Lower leg skin (tissue), 4 donors: ENCODE measurements at regions of chr12 and their contacts with region 1.

Region 1: GRCh38 chr12:3299929-3300832 is 190.8 kb upstream of the PRMT8 start:
- DNase-seq: peak; percentile 92 to 97
- H3K4me3 ChIP-seq: no peak overlapping the region
- CTCF ChIP-seq: peak in 1 of 3 donors; percentile 83
- POLR2A ChIP-seq: no peak

Region 2: GRCh38 chr12:3718100-3718499 is 417.9 kb after region 1 on chr12:
- intact Hi-C with region 1: no loop called
- DNase-seq: no peak
- H3K4me3 ChIP-seq: no peak overlapping the region
- CTCF ChIP-seq: no peak
- POLR2A ChIP-seq: no peak

Region 3: DNA sequence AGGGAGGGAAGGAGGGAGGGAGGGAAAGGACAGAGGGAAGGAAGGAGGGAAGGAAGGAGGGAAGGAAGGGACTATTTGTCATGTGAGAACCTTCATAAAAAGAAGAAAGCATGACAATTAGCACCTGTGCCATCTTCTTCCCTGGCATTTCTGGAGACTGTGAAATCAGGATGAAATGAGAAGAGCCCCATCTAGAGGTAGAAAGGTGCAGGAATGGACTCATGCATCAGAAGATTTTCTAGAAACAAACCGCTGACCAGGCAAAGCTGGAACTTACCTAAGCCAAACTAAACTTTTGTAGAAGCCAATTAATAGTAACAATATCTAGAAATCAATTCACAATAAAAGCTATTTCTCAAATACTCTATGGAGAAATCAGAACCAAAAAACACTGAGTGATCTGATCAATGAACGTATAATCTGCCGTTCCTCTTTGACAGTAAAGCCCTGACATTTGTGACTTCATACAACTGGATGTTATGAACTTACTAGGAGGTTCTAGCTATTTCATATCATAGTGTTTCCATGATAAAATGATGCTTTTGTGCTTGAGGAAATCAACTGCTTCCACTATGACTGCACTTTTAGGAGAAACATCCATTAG is 477.1 kb after region 1 on chr12:
- intact Hi-C with region 1: loop called (anchors 10 kb)
- DNase-seq: no peak
- H3K4me3 ChIP-seq: no peak overlapping the region
- CTCF ChIP-seq: no peak
- POLR2A ChIP-seq: no peak

Region 4: DNA sequence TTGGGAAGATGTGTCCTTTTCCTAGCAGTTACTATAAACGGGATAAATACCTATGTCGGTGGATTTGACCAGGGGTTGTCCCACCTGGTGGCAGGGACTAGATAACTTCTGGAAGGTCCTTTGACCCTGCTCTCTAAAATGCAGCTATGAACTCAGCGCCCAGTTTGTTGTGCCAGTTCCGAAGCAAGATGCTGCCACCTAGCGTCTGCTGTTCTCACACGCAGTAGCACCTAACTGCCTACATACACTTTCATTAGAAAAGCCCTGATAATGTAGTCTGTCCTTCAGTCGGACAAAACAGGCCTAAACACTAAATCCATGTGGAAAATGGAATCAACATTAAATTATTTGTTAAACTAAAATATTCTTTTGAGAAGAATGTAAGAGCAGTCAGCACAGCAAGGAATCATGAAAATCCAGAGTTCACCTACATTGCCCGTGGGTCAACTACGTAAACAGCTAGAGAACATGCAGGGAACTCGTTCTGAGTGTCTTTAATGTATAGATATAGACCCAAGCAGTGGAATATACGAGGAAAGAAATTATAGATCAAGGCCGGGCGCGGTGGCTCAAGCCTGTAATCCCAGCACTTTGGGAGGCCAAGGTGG is 503.8 kb after region 1 on chr12:
- intact Hi-C with region 1: loop called (anchors 5 kb)
- DNase-seq: peak; percentile 55 to 89
- H3K4me3 ChIP-seq: no peak overlapping the region
- CTCF ChIP-seq: peak in 1 of 3 donors; percentile 8
- POLR2A ChIP-seq: no peak